Thyroid gland (tissue), 4 donors: ENCODE measurements at regions of chr12 and their contacts with region 1.

Region 1: DNA sequence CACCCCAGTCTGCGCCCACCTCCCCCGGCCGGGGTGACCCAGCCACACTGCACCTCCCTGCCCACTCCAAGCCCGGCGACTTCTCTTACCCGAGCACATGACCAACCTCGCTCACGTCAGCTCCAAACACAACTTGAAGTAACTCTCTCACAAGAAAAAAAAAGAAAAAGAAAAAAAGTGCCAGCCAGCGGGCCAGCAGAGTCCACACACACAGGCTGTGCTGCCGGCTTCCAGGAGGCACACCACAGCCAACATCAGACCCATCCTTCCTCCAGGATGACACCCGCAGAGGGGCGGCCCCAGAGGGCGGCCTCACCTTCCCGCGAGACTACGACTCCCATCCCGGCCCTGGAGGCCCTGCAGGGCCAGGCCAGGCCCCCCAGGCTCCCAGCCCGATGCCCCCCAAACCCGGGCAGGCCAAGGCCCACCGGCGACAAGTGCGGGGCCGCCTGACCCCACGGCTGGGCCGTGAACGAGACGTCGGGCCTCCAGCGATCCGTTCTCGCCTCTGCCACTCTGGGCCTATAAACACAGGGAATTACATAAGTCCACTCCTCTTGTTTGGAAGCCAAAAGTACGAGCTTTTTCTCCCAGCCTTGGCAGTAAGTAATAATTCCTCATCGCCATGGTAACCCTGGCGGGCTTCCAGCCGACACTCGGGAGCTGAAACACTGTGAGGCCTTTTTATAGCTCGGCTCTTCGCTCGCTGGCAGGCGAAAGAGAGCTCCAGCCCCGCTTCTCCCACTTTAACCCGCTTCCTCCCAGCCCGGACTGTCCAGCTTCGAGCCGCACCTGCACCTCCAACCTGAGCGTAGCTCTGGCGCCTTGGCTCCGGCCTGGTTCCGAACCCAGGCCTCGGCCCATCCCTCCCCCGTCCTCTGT is 49.1 kb downstream of the NCOR2 start:
- DNase-seq: peak; percentile 99 to 100
- H3K4me3 ChIP-seq: peak overlapping the region in 2 of 3 donors; percentile 18 to 38
- H3K27ac ChIP-seq: peak overlapping the region; percentile 97 to 100 (median 99)
- H3K4me1 ChIP-seq: peaks cover 74% of the 10 kb centered on the region in 2 donors
- H3K27me3 ChIP-seq: no peaks in the 10 kb centered on the region
- CTCF ChIP-seq: no peak
- POLR2A ChIP-seq: peak in 1 of 2 donors; percentile 69

Region 2: GRCh38 chr12:124422570-124423523 is 95.4 kb before region 1 on chr12:
- intact Hi-C with region 1: loop called (anchors 5 kb)
- DNase-seq: peak; percentile 93 to 96
- H3K4me3 ChIP-seq: peak overlapping the region in 1 of 3 donors; percentile 8
- H3K27ac ChIP-seq: peak overlapping the region; percentile 81 to 94 (median 82)
- H3K4me1 ChIP-seq: peaks cover 21 to 42% of the 10 kb centered on the region in 2 donors
- H3K27me3 ChIP-seq: no peaks in the 10 kb centered on the region
- CTCF ChIP-seq: peak in 1 of 6 experiments; percentile 21
- POLR2A ChIP-seq: no peak

Region 3: GRCh38 chr12:124567661-124568373 is 49.5 kb after region 1 on chr12:
- intact Hi-C with region 1: loop called (anchors 5 kb)
- DNase-seq: peak; percentile 95
- H3K4me3 ChIP-seq: peak overlapping the region in 1 of 3 donors; percentile 28
- H3K27ac ChIP-seq: peak overlapping the region; percentile 64 to 89 (median 79)
- H3K4me1 ChIP-seq: peaks cover 40 to 42% of the 10 kb centered on the region in 2 donors
- H3K27me3 ChIP-seq: no peaks in the 10 kb centered on the region
- CTCF ChIP-seq: no peak
- POLR2A ChIP-seq: no peak

Region 4: DNA sequence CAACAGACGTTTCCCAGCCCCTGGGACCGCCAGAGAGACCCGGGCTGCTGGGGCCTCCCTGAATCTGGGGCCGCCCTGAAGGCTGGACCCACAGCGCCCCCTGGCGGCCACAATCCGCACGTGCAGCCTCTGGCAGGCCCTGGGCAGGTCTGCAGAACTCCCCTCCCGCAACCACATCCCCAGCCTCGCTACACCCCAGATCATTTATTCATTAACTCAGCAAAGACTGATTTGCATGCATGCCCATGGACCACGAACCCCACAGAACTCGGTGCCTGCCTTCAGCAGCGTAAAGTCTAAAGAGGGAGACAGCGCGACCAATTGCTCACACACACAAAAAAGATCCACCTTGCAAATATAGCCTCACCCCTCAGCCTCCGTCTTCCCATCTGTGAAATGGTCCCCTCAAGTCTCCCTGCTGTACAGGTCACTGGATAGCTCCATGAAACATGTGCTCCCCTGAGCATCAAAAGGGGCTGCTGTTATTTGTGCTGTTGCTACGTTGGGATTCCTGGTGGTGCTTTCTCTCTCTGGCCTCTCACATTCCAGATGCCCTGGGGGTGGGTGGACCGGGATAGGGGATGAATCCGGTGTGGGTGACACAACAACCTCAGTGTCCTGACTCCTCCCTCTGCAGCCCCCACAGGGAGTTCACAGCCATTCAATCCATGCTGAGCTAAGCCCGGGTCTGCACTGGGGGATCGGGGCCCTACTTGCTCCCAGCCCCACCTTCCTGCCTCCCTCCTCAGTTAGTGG is 249.0 kb after region 1 on chr12:
- intact Hi-C with region 1: no loop called
- DNase-seq: peak; percentile 72 to 76
- H3K4me3 ChIP-seq: no peak overlapping the region
- H3K27ac ChIP-seq: peak overlapping the region in 2 of 3 donors; percentile 14 to 56
- H3K4me1 ChIP-seq: peaks cover 5 to 26% of the 10 kb centered on the region in 2 donors
- H3K27me3 ChIP-seq: no peaks in the 10 kb centered on the region
- CTCF ChIP-seq: peak; percentile 95 to 100 (median 98)
- POLR2A ChIP-seq: no peak